Body of pancreas (tissue), 4 donors: ENCODE measurements at regions of chr11 and their contacts with region 1.

Region 1: DNA sequence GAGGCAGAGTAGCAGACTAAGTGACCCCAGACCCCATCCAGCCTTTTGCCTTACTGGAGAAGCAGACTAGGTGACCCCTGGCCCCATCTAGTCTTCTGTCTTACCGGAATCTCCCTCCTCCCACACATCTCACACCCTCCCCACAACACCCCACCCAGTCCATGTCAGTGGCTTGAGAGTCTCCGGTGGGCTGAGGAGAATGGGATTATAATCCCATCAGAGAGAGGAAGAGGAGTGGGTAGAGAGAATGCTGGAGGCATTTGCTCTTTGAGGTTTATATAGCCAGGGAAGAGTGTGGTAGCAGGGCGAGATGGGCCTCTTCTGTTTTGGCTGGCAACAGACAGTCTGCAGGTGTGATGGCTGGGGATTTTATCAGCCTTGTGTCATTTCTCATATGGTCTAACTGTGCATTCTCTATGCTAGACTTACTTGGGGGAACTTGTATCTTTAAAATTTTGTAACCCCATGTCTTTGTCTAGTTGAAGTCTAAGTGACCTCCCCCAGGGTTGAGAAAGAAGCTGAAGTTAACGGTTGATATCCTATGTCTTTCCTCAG is 50.3 kb downstream of the GRAMD1B start:
- DNase-seq: no peak
- ATAC-seq: no peak
- H3K4me3 ChIP-seq: no peak overlapping the region
- H3K27ac ChIP-seq: no peak overlapping the region
- H3K4me1 ChIP-seq: peaks cover 3% of the 10 kb centered on the region
- H3K27me3 ChIP-seq: no peaks in the 10 kb centered on the region
- CTCF ChIP-seq: no peak
- POLR2A ChIP-seq: no peak

Region 2: GRCh38 chr11:123301696-123302400 is 178.5 kb before region 1 on chr11:
- intact Hi-C with region 1: loop called (anchors 10 kb)
- DNase-seq: peak; percentile 36 to 62 (median 49)
- ATAC-seq: peak; percentile 70
- H3K4me3 ChIP-seq: no peak overlapping the region
- H3K27ac ChIP-seq: no peak overlapping the region
- H3K4me1 ChIP-seq: peaks cover 11% of the 10 kb centered on the region
- H3K27me3 ChIP-seq: peaks cover 0 to 7% of the 10 kb centered on the region in 2 donors
- CTCF ChIP-seq: peak in 6 of 7 experiments; percentile 51 to 82 (median 72)
- POLR2A ChIP-seq: no peak

Region 3: DNA sequence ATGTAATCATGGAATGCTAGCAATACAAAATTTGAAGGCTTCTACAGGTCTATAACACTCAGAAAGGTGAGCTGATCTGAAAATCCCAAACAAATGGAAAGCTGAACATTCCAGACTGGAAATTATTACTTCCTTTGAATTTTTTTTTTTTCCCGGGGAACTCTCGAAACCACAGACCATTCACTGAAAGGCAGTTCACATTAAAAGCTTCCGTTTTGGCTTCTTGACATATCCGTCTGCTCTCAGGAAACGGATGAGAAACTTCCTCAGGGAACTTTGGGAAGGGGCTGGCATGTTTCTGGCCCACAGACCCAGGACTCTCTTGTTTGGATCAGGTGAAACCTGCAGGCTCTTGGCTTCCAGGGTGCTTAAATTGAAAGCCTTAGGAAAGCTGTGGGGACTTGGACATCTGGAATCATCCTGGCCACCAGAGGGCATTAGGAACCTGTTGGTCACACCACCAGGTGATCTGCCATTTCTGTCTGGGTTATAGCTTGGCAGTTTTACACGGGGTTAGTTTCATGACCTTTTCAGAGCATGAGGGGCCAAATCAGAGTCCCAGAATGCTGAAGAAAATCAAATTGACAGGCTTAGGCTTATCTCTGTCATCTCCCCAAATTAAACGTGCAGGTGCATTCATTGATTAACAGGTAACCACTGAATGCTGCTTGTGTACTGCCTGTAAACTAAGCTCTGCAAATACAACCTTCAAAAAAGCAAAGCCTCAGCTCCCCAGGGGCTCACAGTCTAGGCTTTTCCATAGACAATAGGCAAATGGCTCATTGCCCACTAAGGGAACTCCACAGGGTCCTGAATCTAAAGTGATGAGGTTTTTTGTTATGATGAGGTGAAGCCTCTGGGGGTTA is 73.0 kb before region 1 on chr11:
- intact Hi-C with region 1: loop called (anchors 5 kb)
- DNase-seq: peak; percentile 70 to 79 (median 74)
- ATAC-seq: peak; percentile 68
- H3K4me3 ChIP-seq: no peak overlapping the region
- H3K27ac ChIP-seq: no peak overlapping the region
- H3K4me1 ChIP-seq: no peaks in the 10 kb centered on the region
- H3K27me3 ChIP-seq: no peaks in the 10 kb centered on the region
- CTCF ChIP-seq: peak; percentile 14 to 73 (median 61)
- POLR2A ChIP-seq: no peak